Mucosa of descending colon (tissue), 3 donors: ENCODE measurements at regions of chr20 and their contacts with region 1.

Region 1: GRCh38 chr20:38165089-38165989 is at the start of gene TGM2:
- DNase-seq: peak; percentile 73 to 87 (median 84)
- ATAC-seq: peak; percentile 96
- H3K4me3 ChIP-seq: no peak within 1 kb of the TSS
- H3K4me1 ChIP-seq: peaks cover 4% of the 10 kb centered on the region
- CTCF ChIP-seq: peak; percentile 74
- total RNA-seq, gene TGM2: 14.9 to 62.2 (median 33.3) TPM

Region 2: GRCh38 chr20:38057351-38057972 is 107.9 kb before region 1 on chr20:
- intact Hi-C with region 1: loop called in 1 of 2 experiments (anchors 5 kb)
- DNase-seq: peak; percentile 73 to 97 (median 81)
- ATAC-seq: peak; percentile 88
- H3K4me3 ChIP-seq: no peak overlapping the region
- H3K4me1 ChIP-seq: no peaks in the 10 kb centered on the region
- CTCF ChIP-seq: peak; percentile 34